ENCODE measurements at regions of chr10 and their contacts with region 1.

Region 1: DNA sequence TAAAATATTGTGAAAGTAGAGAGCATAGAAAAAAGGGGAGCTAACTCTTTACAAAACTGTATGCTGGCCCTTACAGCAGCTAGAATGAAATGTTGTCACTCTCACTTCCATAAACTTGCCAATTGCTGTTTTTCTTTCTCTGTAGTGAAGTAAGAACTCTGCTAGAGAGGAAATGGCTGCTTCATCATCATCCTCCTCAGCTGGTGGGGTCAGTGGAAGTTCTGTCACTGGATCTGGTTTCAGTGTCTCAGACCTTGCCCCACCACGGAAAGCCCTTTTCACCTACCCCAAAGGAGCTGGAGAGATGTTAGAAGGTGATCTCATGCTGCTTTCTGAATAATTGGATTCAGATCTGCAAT is 7.6 kb upstream of the ASCC1 start:
- DNase-seq: no peak
- H3K4me3 ChIP-seq: no peak overlapping the region
- H3K27ac ChIP-seq: no peak overlapping the region
- H3K4me1 ChIP-seq: peaks cover 9% of the 10 kb centered on the region
- H3K27me3 ChIP-seq: no peaks in the 10 kb centered on the region
- CTCF ChIP-seq: no peak

Region 2: GRCh38 chr10:71909399-71910083 is 314.2 kb before region 1 on chr10:
- intact Hi-C with region 1: loop called (anchors 10 kb)
- DNase-seq: no peak
- H3K4me3 ChIP-seq: no peak overlapping the region
- H3K27ac ChIP-seq: no peak overlapping the region
- H3K4me1 ChIP-seq: no peaks in the 10 kb centered on the region
- H3K27me3 ChIP-seq: no peaks in the 10 kb centered on the region
- CTCF ChIP-seq: no peak

Region 3: GRCh38 chr10:72126184-72126871 is 97.4 kb before region 1 on chr10:
- intact Hi-C with region 1: loop called (anchors 10 kb)
- DNase-seq: no peak
- H3K4me3 ChIP-seq: no peak overlapping the region
- H3K27ac ChIP-seq: no peak overlapping the region
- H3K4me1 ChIP-seq: no peaks in the 10 kb centered on the region
- H3K27me3 ChIP-seq: no peaks in the 10 kb centered on the region
- CTCF ChIP-seq: peak; percentile 22

Measured in colonic mucosa (tissue), 4 donors.